Activated CD4-positive, alpha-beta memory T cell treated with anti-CD3 and anti-CD28 coated beads, Interleukin-2, amount 10 ng/mL, durations not matched to agents 7 days and 5 days (primary cell): ENCODE measurements at regions of chr9 and their contacts with region 1.

Region 1: DNA sequence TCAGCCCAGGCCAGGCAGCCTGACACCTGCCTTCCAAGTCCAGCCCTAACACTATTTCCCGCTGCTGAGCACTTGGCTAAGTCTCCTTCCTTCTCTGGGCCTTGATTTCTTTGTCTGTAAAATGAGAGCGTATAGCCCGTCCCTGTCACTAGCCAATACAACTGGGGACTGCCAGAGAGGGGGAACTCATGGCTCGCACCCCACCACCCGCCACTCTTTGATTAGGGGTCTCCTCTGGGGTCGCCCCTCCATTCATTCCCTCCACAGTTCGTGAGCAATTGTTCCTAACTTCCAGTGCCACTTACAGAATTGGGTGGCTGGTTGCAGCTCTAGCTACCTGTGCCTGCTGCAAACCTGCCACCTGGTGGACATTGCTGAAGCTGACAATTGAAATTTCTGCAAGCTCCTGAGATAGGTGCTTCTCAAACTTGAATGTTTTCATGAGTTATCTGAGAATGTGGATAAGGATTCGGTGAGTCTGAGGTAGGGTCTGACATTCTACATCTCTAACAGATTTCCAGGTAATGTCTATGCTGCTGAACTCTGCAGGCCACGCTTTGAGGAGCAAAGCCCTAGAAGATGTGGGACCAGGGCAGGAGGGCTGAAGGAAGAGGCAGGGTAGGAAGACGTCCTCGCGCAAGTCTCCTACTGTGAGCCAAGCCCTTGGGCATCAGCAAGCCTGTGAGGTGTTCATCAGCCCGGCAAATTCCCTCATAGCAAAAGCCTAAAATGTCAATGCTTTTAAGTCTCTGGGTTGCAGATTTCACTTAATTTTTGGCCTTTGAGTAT is 13.3 kb upstream of the RECK start:
- DNase-seq: peak; percentile 66
- H3K4me3 Mint-ChIP-seq: no peak overlapping the region
- H3K27ac Mint-ChIP-seq: no peak overlapping the region
- H3K4me1 Mint-ChIP-seq: no peaks in the 10 kb centered on the region
- H3K27me3 Mint-ChIP-seq: peaks cover 2% of the 10 kb centered on the region

Region 2: GRCh38 chr9:35903049-35903448 is 120.4 kb before region 1 on chr9:
- CTCF ChIA-PET with region 1: interaction called, 17 read pairs
- POLR2A ChIA-PET with region 1: no interaction called
- DNase-seq: peak; percentile 32
- H3K4me3 Mint-ChIP-seq: no peak overlapping the region
- H3K27ac Mint-ChIP-seq: no peak overlapping the region
- H3K4me1 Mint-ChIP-seq: peaks cover 10% of the 10 kb centered on the region
- H3K27me3 Mint-ChIP-seq: peaks cover 12% of the 10 kb centered on the region

Region 3: DNA sequence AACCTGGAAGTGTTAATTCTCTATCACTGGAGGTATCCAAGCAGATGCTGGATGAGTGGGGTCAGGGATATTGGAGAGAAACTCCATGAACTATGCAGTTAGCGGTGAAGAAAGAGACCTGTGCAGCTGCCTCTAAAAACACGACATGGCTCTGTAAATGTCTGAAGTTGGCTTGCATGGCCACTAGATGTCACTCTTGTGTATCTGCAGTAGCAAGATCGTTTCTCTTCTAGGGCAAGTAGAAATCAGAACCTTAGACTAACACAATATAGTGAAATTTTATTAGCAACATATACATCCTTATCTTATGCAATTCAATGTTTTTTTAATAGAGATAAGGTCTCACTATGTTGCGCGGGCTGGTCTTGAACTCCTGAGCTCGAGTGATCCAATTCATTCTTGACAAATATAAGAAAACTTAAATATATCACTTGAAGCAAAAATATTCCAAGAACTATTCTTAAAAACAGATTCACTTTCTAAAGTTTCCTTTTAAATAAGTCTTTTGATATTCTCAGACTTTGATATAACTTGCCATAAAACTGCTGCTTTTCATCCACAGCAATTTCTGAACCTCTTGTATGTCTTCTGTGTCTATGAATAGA is 68.4 kb before region 1 on chr9:
- CTCF ChIA-PET with region 1: interaction called, 11 read pairs
- POLR2A ChIA-PET with region 1: no interaction called
- DNase-seq: peak; percentile 48
- H3K4me3 Mint-ChIP-seq: no peak overlapping the region
- H3K27ac Mint-ChIP-seq: no peak overlapping the region
- H3K4me1 Mint-ChIP-seq: no peaks in the 10 kb centered on the region
- H3K27me3 Mint-ChIP-seq: peaks cover 16% of the 10 kb centered on the region

Region 4: GRCh38 chr9:35984021-35984420 is 39.4 kb before region 1 on chr9:
- CTCF ChIA-PET with region 1: no interaction called
- POLR2A ChIA-PET with region 1: no interaction called
- DNase-seq: no peak
- H3K4me3 Mint-ChIP-seq: no peak overlapping the region
- H3K27ac Mint-ChIP-seq: no peak overlapping the region
- H3K4me1 Mint-ChIP-seq: no peaks in the 10 kb centered on the region
- H3K27me3 Mint-ChIP-seq: peaks cover 54% of the 10 kb centered on the region

Region 5: GRCh38 chr9:36008774-36009300 is 14.6 kb before region 1 on chr9:
- CTCF ChIA-PET with region 1: interaction called, 94 read pairs
- POLR2A ChIA-PET with region 1: no interaction called
- DNase-seq: peak; percentile 70
- H3K4me3 Mint-ChIP-seq: no peak overlapping the region
- H3K27ac Mint-ChIP-seq: no peak overlapping the region
- H3K4me1 Mint-ChIP-seq: peaks cover 20% of the 10 kb centered on the region
- H3K27me3 Mint-ChIP-seq: peaks cover 46% of the 10 kb centered on the region

Region 6: DNA sequence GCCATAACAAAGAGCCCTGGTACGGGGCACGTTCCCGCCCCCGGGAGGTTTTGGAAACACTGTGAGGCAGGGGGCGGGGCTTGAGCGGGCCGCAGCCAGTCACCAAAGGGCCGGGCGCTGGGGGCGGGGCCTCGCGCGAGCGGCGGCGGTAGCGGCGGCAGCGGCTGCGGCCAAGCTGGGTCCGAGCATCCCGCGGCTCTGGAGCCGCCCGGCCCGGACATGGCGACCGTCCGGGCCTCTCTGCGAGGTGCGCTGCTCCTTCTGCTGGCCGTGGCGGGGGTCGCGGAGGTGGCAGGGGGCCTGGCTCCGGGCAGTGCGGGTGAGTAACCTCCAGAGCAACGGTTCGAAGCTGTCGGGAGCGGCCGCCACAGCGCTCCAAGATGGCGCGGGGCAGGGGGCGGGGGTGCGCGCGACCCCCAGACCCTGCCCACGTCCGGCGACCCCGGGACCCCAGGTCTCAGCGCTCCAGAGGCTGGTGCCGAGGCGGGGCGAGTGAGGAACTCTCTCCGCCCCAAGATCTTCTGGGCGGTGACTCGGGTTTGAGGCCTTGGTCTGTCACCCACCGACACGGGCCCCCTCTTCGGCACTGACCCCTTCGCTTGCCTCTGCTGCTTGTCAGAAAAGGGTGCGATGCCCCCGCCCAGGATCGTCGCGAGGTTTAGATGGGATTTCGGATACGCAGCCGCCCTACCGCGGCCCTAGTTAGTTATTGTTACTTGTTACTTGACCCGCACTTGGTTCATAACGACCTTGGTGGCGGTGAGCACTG is 13.5 kb after region 1 on chr9 and contains the start of gene RECK:
- CTCF ChIA-PET with region 1: interaction called, 13 read pairs
- POLR2A ChIA-PET with region 1: interaction called, 3 read pairs
- DNase-seq: peak; percentile 87
- H3K4me3 Mint-ChIP-seq: peak within 1 kb of the TSS; percentile 90
- H3K27ac Mint-ChIP-seq: peak within 1 kb of the TSS; percentile 45
- H3K4me1 Mint-ChIP-seq: peaks cover 37% of the 10 kb centered on the region
- H3K27me3 Mint-ChIP-seq: peaks cover 11% of the 10 kb centered on the region
- total RNA-seq, gene RECK: 7.4 to 8.1 TPM

Region 7: GRCh38 chr9:36053971-36054370 is 30.5 kb after region 1 on chr9:
- CTCF ChIA-PET with region 1: interaction called, 10 read pairs
- POLR2A ChIA-PET with region 1: no interaction called
- DNase-seq: no peak
- H3K4me3 Mint-ChIP-seq: no peak overlapping the region
- H3K27ac Mint-ChIP-seq: no peak overlapping the region
- H3K4me1 Mint-ChIP-seq: no peaks in the 10 kb centered on the region
- H3K27me3 Mint-ChIP-seq: no peaks in the 10 kb centered on the region